ENCODE measurements at regions of chr10 and their contacts with region 1.

Region 1: DNA sequence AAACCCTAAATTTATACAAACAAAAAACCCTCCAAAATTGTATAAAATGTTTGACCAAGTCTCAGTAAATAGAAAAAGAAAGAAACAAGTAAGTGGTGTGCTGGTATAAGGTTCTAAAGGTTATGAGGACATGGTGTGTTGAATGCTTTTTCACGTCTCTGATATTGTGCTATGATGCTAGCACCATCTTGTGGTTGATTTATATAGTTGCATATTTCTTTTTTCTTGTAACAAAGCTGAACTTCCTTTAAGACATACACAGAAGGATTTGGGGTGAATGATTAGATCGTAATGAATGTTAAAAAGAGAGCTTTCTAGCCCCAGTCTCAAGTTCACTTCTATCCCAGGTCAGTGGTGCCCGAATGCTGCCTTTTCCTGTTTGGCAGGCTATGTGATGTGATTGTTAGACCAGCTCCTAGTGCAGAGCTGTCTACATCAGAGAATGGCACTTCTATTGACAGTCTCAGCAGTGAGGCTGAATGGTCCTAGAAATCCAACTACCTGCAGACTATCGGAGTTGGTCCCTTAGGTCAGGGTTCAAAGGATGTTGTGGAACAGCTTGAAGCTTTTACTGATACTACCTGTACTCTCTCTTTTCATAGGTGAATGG is 25.0 kb downstream of the VTI1A start:
- DNase-seq: no peak
- ATAC-seq: peak; percentile 58
- H3K4me3 Mint-ChIP-seq: no peak overlapping the region
- H3K27ac Mint-ChIP-seq: no peak overlapping the region
- H3K4me1 Mint-ChIP-seq: peaks cover 4% of the 10 kb centered on the region
- H3K27me3 Mint-ChIP-seq: no peaks in the 10 kb centered on the region

Region 2: DNA sequence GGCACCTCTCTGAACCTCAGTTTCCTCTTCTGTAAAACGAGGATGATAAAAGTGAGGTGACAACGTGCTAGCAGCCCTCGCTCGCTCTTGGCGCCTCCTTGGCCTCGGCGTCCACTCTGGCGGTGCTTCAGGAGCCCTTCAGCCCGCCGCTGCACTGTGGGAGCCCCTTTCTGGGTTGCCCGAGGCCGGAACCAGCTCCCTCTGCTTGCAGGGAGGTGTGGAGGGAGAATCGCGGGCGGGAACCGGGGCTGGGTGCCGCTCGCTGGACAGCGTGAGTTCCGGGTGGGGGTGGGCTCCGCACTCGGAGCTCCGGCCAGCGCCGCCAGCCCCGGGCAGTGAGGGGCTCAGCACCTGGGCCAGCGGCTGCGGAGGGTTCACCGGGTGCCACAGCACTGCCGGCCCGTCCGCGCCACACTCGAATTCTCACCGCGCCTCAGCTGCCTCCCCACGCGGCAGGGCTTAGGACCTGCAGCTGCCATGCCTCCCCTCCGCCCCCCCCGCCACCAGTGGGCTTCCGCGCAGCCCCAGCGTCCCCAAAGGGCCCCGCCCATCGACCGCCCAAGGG is 122.4 kb before region 1 on chr10:
- CTCF ChIA-PET with region 1: no interaction called
- POLR2A ChIA-PET with region 1: no interaction called
- DNase-seq: no peak
- ATAC-seq: no peak
- H3K4me3 Mint-ChIP-seq: no peak overlapping the region
- H3K27ac Mint-ChIP-seq: no peak overlapping the region
- H3K4me1 Mint-ChIP-seq: no peaks in the 10 kb centered on the region
- H3K27me3 Mint-ChIP-seq: no peaks in the 10 kb centered on the region

Region 3: GRCh38 chr10:112361951-112362751 is 109.8 kb before region 1 on chr10:
- CTCF ChIA-PET with region 1: no interaction called
- POLR2A ChIA-PET with region 1: no interaction called
- DNase-seq: no peak
- ATAC-seq: no peak
- H3K4me3 Mint-ChIP-seq: no peak overlapping the region
- H3K27ac Mint-ChIP-seq: no peak overlapping the region
- H3K4me1 Mint-ChIP-seq: no peaks in the 10 kb centered on the region
- H3K27me3 Mint-ChIP-seq: peaks cover 2% of the 10 kb centered on the region

Region 4: GRCh38 chr10:112434988-112435619 is 36.9 kb before region 1 on chr10:
- CTCF ChIA-PET with region 1: interaction called, 11 read pairs
- POLR2A ChIA-PET with region 1: no interaction called
- DNase-seq: no peak
- ATAC-seq: no peak
- H3K4me3 Mint-ChIP-seq: no peak overlapping the region
- H3K27ac Mint-ChIP-seq: no peak overlapping the region
- H3K4me1 Mint-ChIP-seq: no peaks in the 10 kb centered on the region
- H3K27me3 Mint-ChIP-seq: no peaks in the 10 kb centered on the region

Region 5: DNA sequence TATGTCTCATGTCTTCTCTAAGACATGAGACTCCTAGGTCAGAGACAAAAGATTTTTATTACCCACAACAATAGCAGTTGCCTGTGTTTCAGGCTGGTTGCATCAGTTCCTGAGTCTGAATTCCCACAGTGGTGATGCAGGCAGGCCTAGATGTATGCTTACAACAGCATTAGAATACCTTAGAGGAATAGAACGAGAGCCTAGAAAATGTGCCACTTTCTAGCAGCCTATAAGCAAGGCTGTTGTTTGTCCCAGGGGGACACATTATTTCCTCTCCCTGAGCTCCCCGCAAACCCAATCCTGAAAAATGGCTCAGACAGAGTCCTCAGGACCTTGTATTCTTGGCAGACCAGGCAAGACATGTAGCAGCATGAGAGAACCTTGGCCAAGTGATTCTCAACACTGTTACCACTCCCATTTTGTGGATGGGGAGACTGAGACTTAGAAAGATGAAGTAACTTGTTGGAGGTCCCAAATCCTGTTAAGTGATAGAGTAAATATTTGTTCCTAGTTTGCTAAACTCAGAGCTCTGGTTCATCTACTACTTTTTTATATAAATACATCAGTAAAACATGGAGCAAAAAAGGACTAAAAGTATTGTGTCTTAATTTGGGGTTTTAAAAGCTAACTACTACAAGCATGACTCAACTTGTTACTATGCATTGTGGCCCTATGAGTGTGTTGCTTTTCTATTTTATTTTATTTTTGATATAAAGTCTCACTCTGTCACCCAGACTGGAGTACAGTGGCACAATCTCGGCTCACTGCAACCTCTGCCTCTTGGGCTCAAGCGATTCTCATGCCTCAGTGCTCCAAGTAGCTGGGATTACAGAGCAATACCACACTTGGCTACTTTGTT is 10.7 kb before region 1 on chr10:
- CTCF ChIA-PET with region 1: interaction called, 14 read pairs
- POLR2A ChIA-PET with region 1: no interaction called
- DNase-seq: peak; percentile 25
- ATAC-seq: peak; percentile 42
- H3K4me3 Mint-ChIP-seq: no peak overlapping the region
- H3K27ac Mint-ChIP-seq: peak overlapping the region; percentile 6
- H3K4me1 Mint-ChIP-seq: peaks cover 2% of the 10 kb centered on the region
- H3K27me3 Mint-ChIP-seq: no peaks in the 10 kb centered on the region

Region 6: GRCh38 chr10:112639298-112639697 is 167.3 kb after region 1 on chr10:
- CTCF ChIA-PET with region 1: no interaction called
- POLR2A ChIA-PET with region 1: no interaction called
- DNase-seq: no peak
- ATAC-seq: no peak
- H3K4me3 Mint-ChIP-seq: no peak overlapping the region
- H3K27ac Mint-ChIP-seq: no peak overlapping the region
- H3K4me1 Mint-ChIP-seq: no peaks in the 10 kb centered on the region
- H3K27me3 Mint-ChIP-seq: no peaks in the 10 kb centered on the region

Region 7: GRCh38 chr10:113385021-113385999 is 913.3 kb after region 1 on chr10:
- CTCF ChIA-PET with region 1: interaction called, 14 read pairs
- POLR2A ChIA-PET with region 1: interaction called, 3 read pairs
- DNase-seq: peak; percentile 77
- ATAC-seq: peak; percentile 95
- H3K4me3 Mint-ChIP-seq: no peak overlapping the region
- H3K27ac Mint-ChIP-seq: no peak overlapping the region
- H3K4me1 Mint-ChIP-seq: peaks cover 28% of the 10 kb centered on the region
- H3K27me3 Mint-ChIP-seq: peaks cover 20% of the 10 kb centered on the region

Measured in activated CD8-positive, alpha-beta T cell treated with anti-CD3 and anti-CD28 coated beads, Interleukin-2, amount 10 ng/mL, durations not matched to agents 7 days and 5 days (primary cell).